Activated T-helper 1 cell treated with anti-CD3 and anti-CD28 coated beads, Interleukin-12 subunit alpha, Interleukin-12 subunit beta, Interleukin-2, Interleukin-4 antibody, amounts not matched to agents 30 ng/mL and 10 ng/mL and 1 ng/mL, durations not matched to agents 14 hours and 24 hours and 36 hours (primary cell): ENCODE measurements at regions of chr2 and their contacts with region 1.

Region 1: GRCh38 chr2:64036034-64036705 is 16.9 kb upstream of the VPS54 start:
- DNase-seq: peak; percentile 36
- H3K4me3 Mint-ChIP-seq: peak overlapping the region; percentile 51
- H3K27ac Mint-ChIP-seq: peak overlapping the region; percentile 89
- H3K4me1 Mint-ChIP-seq: peaks cover 55% of the 10 kb centered on the region
- H3K27me3 Mint-ChIP-seq: no peaks in the 10 kb centered on the region

Region 2: DNA sequence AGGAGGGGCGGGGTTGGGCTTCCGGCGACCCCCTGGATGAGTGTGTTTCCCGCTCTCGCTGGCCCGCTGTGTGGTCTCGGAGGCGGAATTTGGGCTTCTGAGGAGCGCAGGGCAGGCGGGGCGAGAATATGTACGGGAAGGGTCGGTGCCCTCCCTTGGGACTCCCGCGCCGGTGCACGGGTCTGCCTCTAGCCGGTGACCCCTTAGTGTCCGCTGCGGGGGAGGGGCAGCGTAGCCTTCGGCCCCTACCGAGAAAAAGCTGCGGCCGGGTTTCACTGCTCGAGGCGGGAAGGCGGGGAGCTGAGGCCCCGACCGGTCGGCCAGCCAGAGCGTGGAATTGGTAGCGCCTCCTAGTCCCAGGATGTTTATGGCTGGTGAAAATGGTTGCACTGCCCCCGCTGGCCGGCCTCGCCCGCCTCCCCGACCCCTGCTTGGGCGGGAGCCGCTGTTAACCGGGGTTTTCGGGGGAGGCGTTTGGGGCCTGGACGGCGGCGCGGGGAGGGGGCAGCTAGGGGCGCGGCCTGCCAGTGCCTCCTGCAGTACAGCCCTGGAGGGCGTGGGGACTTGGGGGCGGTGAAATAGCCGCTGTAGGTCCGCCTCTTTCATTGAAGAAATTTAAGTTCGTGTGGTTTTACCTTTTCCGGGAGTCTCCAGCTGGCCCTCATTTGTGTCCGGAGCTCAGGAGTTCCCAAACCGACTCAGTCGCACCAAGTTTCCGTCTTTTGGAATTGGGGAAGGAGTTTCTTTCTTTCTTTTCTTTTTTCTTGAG is 194.7 kb before region 1 on chr2 and contains the start of gene UGP2:
- intact Hi-C with region 1: loop called (anchors 1 kb)
- DNase-seq: peak; percentile 83
- H3K4me3 Mint-ChIP-seq: peak within 1 kb of the TSS; percentile 99
- H3K27ac Mint-ChIP-seq: peak within 1 kb of the TSS; percentile 99
- H3K4me1 Mint-ChIP-seq: peaks cover 47% of the 10 kb centered on the region
- H3K27me3 Mint-ChIP-seq: no peaks in the 10 kb centered on the region
- total RNA-seq, gene UGP2: 60.3 and 65.9 TPM in 2 replicates

Region 3: GRCh38 chr2:64018923-64019718 is 17.0 kb before region 1 on chr2 and contains the start of gene VPS54:
- intact Hi-C with region 1: loop called (anchors 1 kb)
- DNase-seq: peak; percentile 53
- H3K4me3 Mint-ChIP-seq: peak within 1 kb of the TSS; percentile 94
- H3K27ac Mint-ChIP-seq: peak within 1 kb of the TSS; percentile 97
- H3K4me1 Mint-ChIP-seq: peaks cover 43% of the 10 kb centered on the region
- H3K27me3 Mint-ChIP-seq: no peaks in the 10 kb centered on the region
- total RNA-seq, gene VPS54: 14.9 and 15.4 TPM in 2 replicates

Region 4: DNA sequence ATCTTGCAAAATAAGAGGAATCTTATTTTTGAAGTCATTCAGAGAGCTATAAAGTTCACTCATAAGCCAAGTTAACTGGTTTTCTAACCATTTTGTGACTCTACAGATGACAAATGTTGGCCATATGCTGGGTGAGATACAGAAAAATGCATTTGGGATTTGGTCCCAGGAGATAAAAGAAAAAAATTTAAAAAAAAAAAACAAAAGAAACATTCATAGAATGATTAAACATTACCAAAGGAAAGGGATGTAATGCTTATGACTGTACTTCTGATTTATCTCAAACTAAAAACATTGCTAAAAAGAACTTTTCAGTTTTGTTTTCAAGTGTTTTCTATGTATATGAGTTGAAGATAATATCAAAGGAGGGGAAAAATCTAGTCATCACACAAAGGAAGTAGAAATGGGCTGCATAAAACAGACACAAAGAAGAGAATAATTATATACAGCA is 65.0 kb after region 1 on chr2:
- intact Hi-C with region 1: loop called (anchors 1 kb)
- DNase-seq: no peak
- H3K4me3 Mint-ChIP-seq: no peak overlapping the region
- H3K27ac Mint-ChIP-seq: peak overlapping the region; percentile 76
- H3K4me1 Mint-ChIP-seq: peaks cover 54% of the 10 kb centered on the region
- H3K27me3 Mint-ChIP-seq: no peaks in the 10 kb centered on the region

Region 5: GRCh38 chr2:64203858-64204632 is 167.9 kb after region 1 on chr2:
- intact Hi-C with region 1: loop called (anchors 2 kb)
- DNase-seq: peak; percentile 49
- H3K4me3 Mint-ChIP-seq: peak overlapping the region; percentile 76
- H3K27ac Mint-ChIP-seq: peak overlapping the region; percentile 91
- H3K4me1 Mint-ChIP-seq: peaks cover 84% of the 10 kb centered on the region
- H3K27me3 Mint-ChIP-seq: no peaks in the 10 kb centered on the region

Region 6: DNA sequence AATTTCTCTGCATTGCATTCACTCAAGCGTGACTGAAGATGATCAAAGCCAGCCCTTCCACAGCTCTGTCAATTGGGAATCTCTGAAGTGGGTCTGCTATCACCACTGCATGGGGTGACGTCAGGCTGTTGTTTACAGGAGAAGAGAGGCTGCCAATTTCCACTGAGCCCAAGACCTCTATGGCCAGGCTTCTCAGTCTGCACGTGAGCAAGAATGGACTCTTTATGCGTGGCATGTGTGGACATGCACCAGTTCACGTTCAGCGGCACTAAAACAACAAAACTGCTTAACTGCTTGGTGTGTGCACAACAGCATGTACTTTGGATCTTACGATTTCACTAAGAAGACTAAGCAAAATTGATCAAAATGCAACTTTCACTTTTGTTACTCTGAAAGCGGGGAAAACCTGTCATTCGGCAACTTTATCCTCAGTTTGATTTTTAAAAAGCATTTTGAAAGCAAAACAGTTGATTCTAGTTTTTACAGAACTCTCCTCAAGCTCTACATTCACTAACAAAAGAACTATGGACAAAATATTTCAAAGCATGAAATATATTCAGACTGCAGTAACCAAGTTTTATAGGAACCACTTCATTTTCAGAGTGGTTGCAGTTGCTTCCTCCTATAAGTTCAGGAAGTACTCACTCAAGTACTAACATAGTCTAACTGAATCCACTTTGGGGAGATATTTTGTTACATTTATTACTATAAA is 694.5 kb after region 1 on chr2:
- intact Hi-C with region 1: loop called (anchors 10 kb)
- DNase-seq: peak; percentile 35
- H3K4me3 Mint-ChIP-seq: peak overlapping the region; percentile 85
- H3K27ac Mint-ChIP-seq: peak overlapping the region; percentile 89
- H3K4me1 Mint-ChIP-seq: peaks cover 77% of the 10 kb centered on the region
- H3K27me3 Mint-ChIP-seq: no peaks in the 10 kb centered on the region